ENCODE measurements at regions of chr1 and their contacts with region 1.

Region 1: GRCh38 chr1:6245086-6245868 is 1.3 kb downstream of the HES3 start:
- DNase-seq: peak; percentile 61 to 89 (median 74)
- ATAC-seq: peak; percentile 86
- H3K4me3 ChIP-seq: no peak overlapping the region
- H3K4me3 Mint-ChIP-seq: no peak overlapping the region
- H3K27ac ChIP-seq: no peak overlapping the region
- H3K27ac Mint-ChIP-seq: no peak overlapping the region
- H3K4me1 ChIP-seq: peaks cover 15% of the 10 kb centered on the region
- H3K4me1 Mint-ChIP-seq: peaks cover 11% of the 10 kb centered on the region
- H3K27me3 ChIP-seq: peaks cover 51 to 55% of the 10 kb centered on the region in 2 experiments
- H3K27me3 Mint-ChIP-seq: peaks cover 52% of the 10 kb centered on the region
- CTCF ChIP-seq: peak; percentile 65

Region 2: DNA sequence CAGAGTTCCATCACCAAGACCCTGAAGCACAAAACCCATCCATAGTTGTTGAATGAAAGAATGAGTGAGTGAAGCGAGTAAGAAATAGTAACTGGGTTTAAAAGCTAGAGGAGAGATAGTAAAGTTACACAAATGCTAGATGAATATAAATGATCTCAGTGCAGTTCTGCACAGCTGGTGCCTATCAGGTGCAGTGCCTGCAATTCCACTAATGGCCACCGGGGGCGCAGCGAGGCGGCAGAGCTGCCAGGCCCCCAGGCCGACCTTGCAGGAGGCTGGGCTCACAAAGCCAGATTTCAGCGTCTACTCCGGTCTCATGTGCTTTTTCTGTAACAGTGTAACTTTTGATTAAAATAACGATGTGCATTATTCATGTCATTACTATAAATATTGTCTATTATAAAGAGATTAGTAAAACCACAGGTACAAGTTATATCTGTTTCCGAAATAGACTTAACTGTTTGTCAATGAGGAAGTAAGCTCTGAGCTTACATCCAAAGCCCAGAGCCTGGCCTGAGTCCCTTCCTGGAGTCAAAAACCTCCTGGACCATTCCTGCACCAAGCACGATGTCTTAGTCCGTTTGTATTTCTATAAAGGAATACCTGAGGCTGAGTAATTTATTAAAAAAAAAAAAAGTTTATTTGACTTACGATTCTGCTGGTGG is 730.6 kb before region 1 on chr1:
- CTCF ChIA-PET with region 1: interaction called, 4 read pairs
- POLR2A ChIA-PET with region 1: no interaction called
- intact Hi-C with region 1: loop called in 1 of 2 experiments (anchors 1 kb)
- DNase-seq: peak; percentile 48 to 84 (median 64)
- ATAC-seq: peak; percentile 38
- H3K4me3 ChIP-seq: no peak overlapping the region
- H3K4me3 Mint-ChIP-seq: no peak overlapping the region
- H3K27ac ChIP-seq: no peak overlapping the region
- H3K27ac Mint-ChIP-seq: no peak overlapping the region
- H3K4me1 ChIP-seq: no peaks in the 10 kb centered on the region
- H3K4me1 Mint-ChIP-seq: peaks cover 7% of the 10 kb centered on the region
- H3K27me3 ChIP-seq: peaks cover 0 to 3% of the 10 kb centered on the region in 2 experiments
- H3K27me3 Mint-ChIP-seq: peaks cover 11% of the 10 kb centered on the region
- CTCF ChIP-seq: peak; percentile 100

Region 3: DNA sequence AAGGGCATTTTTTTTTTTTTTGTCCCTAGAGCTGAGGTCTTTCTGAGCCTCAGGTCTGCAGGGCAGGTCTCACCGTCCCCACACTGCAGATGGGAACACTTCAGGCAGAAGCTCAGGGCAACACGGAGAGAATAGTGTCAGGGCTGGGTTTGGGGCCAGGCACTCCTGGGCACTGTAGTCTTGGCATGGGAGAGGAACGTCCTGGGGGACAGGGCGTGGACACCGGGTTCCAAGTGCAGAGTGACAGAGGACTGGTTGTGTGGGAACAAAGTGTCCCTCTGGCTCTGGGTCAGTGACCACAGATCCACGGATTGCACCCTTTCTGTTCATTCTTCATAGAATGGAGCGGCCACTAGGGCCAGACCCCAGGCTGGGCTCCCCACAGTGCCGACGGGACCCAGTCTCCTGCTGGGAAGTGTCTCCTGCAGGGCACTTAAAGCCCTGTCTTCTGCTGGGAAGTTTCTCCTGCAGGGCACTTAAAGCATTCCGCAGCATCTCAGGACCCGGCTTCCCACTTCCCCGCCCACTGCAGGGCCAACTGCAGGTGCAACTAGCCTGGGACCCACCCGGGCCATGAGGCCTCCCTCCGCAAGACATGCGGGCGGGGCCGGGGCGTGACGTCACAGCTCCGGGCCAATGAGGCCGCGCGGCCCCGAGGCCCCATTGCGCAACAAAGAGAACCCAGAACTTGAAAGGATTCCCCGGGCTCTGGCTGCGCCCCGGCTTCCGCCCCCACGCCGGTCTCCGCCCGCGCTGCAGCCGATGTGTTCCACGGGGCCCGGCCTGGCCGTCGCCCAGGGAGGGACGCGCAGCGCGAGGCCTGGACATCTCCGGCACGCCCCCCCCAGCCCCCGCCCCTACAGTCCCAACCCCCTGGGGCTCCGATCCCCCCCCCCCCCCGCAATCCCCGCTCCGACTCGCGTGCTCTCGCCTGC is 14.5 kb after region 1 on chr1:
- CTCF ChIA-PET with region 1: interaction called, 19 read pairs
- POLR2A ChIA-PET with region 1: no interaction called
- intact Hi-C with region 1: loop called in 1 of 2 experiments (anchors 2 kb)
- DNase-seq: peak; percentile 58 to 90 (median 81)
- ATAC-seq: peak; percentile 79
- H3K4me3 ChIP-seq: peak overlapping the region; percentile 41 to 45
- H3K4me3 Mint-ChIP-seq: peak overlapping the region; percentile 66
- H3K27ac ChIP-seq: no peak overlapping the region
- H3K27ac Mint-ChIP-seq: no peak overlapping the region
- H3K4me1 ChIP-seq: peaks cover 7% of the 10 kb centered on the region
- H3K4me1 Mint-ChIP-seq: peaks cover 11% of the 10 kb centered on the region
- H3K27me3 ChIP-seq: no peaks in the 10 kb centered on the region
- H3K27me3 Mint-ChIP-seq: peaks cover 7% of the 10 kb centered on the region
- CTCF ChIP-seq: no peak

Region 4: DNA sequence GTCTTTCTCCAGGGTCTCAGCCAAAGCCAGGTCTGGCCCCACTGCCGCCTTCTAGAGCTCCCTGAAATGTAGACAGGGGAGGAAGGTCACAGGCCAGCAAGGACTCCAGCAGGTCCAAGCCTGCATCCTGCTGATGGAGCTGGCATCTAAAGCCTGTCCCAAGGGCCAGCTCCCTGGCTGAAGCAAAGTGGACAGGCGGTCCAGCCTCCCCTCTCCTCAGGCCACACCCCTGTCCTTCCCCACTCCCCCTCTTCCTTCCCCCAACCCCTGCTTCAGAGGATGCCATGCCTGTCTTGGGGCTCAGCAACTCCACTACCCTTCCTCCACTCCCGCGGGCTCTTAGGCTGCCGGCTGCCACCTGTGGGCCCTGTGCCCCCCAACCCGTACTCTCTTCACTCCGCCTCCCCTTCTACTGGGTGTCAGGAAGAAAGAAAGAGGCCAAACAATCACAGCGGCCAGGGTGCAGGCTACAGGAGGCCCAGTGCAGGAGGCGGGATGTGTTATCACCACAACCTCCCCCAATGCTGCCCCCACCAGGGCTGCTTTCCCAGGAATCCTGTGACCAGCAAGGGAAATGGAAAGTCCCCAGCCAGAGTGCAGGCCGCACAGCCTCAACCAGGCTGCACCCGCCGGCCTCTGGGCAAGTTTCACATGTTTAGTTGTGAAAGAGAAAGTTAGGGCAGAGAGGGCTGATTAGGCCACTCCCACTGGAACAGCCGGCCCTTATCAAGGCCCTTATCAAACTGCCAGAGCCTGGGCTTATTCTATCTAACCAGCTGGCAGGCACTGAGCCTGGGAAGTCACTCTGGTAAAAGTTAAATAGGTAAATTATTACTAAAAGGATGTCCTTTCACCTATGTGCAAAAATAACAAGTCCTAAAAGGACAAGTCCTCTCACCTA is 114.2 kb after region 1 on chr1:
- CTCF ChIA-PET with region 1: interaction called, 42 read pairs
- POLR2A ChIA-PET with region 1: no interaction called
- intact Hi-C with region 1: no loop called
- DNase-seq: peak in 7 of 9 experiments; percentile 34 to 80 (median 63)
- ATAC-seq: peak; percentile 69
- H3K4me3 ChIP-seq: peak overlapping the region; percentile 23 to 51
- H3K4me3 Mint-ChIP-seq: peak overlapping the region; percentile 69
- H3K27ac ChIP-seq: peak overlapping the region; percentile 49 to 80
- H3K27ac Mint-ChIP-seq: peak overlapping the region; percentile 85
- H3K4me1 ChIP-seq: peaks cover 41% of the 10 kb centered on the region
- H3K4me1 Mint-ChIP-seq: peaks cover 37% of the 10 kb centered on the region
- H3K27me3 ChIP-seq: no peaks in the 10 kb centered on the region
- H3K27me3 Mint-ChIP-seq: no peaks in the 10 kb centered on the region
- CTCF ChIP-seq: no peak

Region 5: DNA sequence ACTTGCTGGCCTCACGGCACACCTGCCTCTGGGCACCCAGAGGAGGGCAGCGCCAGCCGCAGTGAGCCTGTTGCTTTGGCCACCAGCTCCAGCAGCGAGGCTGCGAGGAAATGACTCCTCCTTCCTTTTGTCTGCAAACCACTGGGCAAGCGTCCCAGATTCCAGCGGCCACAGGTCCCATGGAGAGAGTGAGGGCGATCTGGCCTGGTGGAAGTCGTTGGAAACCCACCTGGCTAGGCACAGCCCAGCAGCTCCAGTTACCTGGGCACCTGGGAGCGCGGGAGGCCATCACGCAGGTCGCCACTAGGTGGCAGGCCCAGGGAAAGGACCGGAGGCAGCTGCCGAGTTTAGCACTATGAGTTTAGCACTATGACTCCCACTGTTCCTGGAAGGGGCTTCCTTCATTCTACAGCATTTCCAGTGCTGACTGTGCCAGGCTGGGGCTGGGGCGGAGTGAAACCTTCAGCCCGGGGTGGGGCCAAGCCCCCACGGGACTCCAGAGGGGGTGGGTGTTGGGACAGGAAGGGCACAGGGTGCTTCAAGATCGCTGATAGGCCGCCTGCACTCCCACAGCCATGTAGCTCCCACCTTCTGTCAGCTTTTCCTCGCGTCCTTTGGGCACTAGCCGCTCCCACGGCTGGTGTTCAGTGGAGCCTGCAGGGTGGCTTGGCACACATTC is 178.2 kb after region 1 on chr1:
- CTCF ChIA-PET with region 1: interaction called, 15 read pairs
- POLR2A ChIA-PET with region 1: no interaction called
- intact Hi-C with region 1: no loop called
- DNase-seq: peak; percentile 49 to 83 (median 75)
- ATAC-seq: peak; percentile 84
- H3K4me3 ChIP-seq: peak overlapping the region; percentile 12 to 46
- H3K4me3 Mint-ChIP-seq: peak overlapping the region; percentile 72
- H3K27ac ChIP-seq: no peak overlapping the region
- H3K27ac Mint-ChIP-seq: no peak overlapping the region
- H3K4me1 ChIP-seq: peaks cover 33% of the 10 kb centered on the region
- H3K4me1 Mint-ChIP-seq: peaks cover 9% of the 10 kb centered on the region
- H3K27me3 ChIP-seq: peaks cover 26 to 53% of the 10 kb centered on the region in 2 experiments
- H3K27me3 Mint-ChIP-seq: peaks cover 37% of the 10 kb centered on the region
- CTCF ChIP-seq: peak; percentile 72

Region 6: GRCh38 chr1:6646499-6647148 is 401.3 kb after region 1 on chr1:
- CTCF ChIA-PET with region 1: no interaction called
- POLR2A ChIA-PET with region 1: no interaction called
- intact Hi-C with region 1: loop called in 1 of 2 experiments (anchors 5 kb)
- DNase-seq: peak in 6 of 9 experiments; percentile 8 to 69 (median 30)
- ATAC-seq: peak; percentile 74
- H3K4me3 ChIP-seq: no peak overlapping the region
- H3K4me3 Mint-ChIP-seq: no peak overlapping the region
- H3K27ac ChIP-seq: no peak overlapping the region
- H3K27ac Mint-ChIP-seq: no peak overlapping the region
- H3K4me1 ChIP-seq: no peaks in the 10 kb centered on the region
- H3K4me1 Mint-ChIP-seq: peaks cover 3% of the 10 kb centered on the region
- H3K27me3 ChIP-seq: no peaks in the 10 kb centered on the region
- H3K27me3 Mint-ChIP-seq: no peaks in the 10 kb centered on the region
- CTCF ChIP-seq: peak; percentile 64

Measured in CD8-positive, alpha-beta T cell (primary cell).